ENCODE measurements at regions of chr3 and their contacts with region 1.

Region 1: DNA sequence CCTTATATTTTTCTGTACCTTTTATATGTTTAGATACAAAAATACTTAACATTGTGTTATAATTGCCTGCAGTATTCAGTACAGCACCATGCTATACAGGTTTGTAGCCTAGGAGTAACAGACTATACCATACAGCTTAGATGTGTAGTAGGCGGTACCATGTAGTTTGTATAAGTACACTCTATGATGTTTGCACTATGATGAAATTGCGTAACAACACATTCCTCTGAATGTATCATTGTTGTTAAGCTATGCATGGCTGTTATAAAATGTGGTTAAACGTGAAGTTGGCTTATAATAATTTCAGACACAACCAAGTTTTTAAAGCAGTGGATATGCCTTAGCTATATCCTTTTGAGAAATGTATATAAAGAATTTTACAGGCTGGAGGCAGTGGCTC is 328.3 kb downstream of the PLCL2 start:
- DNase-seq: peak; percentile 65
- ATAC-seq: peak; percentile 66
- H3K4me3 ChIP-seq: no peak overlapping the region
- H3K27ac ChIP-seq: no peak overlapping the region
- H3K4me1 ChIP-seq: peaks cover 3% of the 10 kb centered on the region; the same call in 1 of the 2 replicates
- H3K27me3 ChIP-seq: no peaks in the 10 kb centered on the region
- CTCF ChIP-seq: no peak
- POLR2A ChIP-seq: no peak
- RAD21 ChIP-seq: no peak

Region 2: GRCh38 chr3:17182166-17182565 is 30.9 kb before region 1 on chr3:
- CTCF ChIA-PET with region 1: interaction called, 3 read pairs
- POLR2A ChIA-PET with region 1: interaction called, 15 read pairs
- dilution Hi-C with region 1: no loop called
- in situ Hi-C with region 1: no loop called
- intact Hi-C with region 1: no loop called
- DNase-seq: no peak
- ATAC-seq: no peak
- H3K4me3 ChIP-seq: no peak overlapping the region
- H3K27ac ChIP-seq: no peak overlapping the region
- H3K4me1 ChIP-seq: no peaks in the 10 kb centered on the region; the same call in 1 of the 2 replicates
- H3K27me3 ChIP-seq: no peaks in the 10 kb centered on the region
- CTCF ChIP-seq: no peak
- POLR2A ChIP-seq: no peak
- RAD21 ChIP-seq: no peak

Region 3: GRCh38 chr3:17195856-17196604 is 17.1 kb before region 1 on chr3:
- CTCF ChIA-PET with region 1: interaction called, 10 read pairs
- POLR2A ChIA-PET with region 1: interaction called, 3 read pairs
- dilution Hi-C with region 1: no loop called
- in situ Hi-C with region 1: no loop called
- intact Hi-C with region 1: no loop called
- DNase-seq: peak; percentile 24
- ATAC-seq: peak; percentile 62
- H3K4me3 ChIP-seq: no peak overlapping the region
- H3K27ac ChIP-seq: no peak overlapping the region
- H3K4me1 ChIP-seq: peaks cover 3% of the 10 kb centered on the region; the same call in 1 of the 2 replicates
- H3K27me3 ChIP-seq: no peaks in the 10 kb centered on the region
- CTCF ChIP-seq: peak; percentile 36; the same call in 1 of the 2 replicates
- POLR2A ChIP-seq: no peak
- RAD21 ChIP-seq: no peak

Measured in IMR-90 (cell line).